GM23248 (cell line): ENCODE measurements at regions of chr1 and their contacts with region 1.

Region 1: DNA sequence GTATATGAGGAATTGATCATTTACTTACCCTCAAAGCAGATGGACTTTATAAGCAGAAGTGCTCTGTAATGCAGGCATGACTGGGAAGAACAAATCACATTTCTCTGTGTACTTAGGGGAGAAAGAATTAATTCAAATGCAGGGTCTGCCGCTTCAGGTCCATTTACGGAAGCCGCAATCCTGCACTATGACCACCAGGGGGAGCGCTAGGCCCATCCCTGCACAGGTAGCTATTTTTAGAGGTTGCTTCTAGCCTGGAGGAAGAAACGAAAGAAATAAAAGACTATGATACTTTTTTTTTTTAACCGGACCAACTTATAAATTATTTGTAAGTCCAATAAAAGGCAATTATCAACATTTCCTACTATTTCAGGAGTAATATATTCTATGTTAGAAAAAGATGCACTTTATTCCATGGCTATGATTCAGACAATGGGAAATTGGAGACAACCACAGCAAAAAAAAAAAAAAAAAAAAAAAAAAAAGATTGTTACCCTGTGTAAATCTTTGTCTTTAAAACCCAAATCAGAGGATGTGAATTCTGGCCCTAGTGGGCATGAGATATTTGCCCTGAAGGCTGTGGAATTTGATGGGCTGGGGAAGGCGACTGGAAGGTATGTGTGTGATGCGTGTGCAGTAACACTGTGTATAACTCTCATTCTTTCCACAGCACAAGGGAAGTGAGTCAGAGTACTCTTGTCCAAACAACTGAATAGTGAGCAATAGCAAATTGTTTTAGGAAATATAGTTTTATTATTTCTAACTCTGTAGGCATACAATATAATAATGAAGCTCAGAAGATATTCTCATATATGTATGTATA is 12.9 kb upstream of the FYB2 start:
- DNase-seq: peak; percentile 97
- H3K4me3 ChIP-seq: peak overlapping the region; percentile 53
- H3K27ac ChIP-seq: peak overlapping the region; percentile 77
- H3K4me1 ChIP-seq: peaks cover 16% of the 10 kb centered on the region
- H3K27me3 ChIP-seq: no peaks in the 10 kb centered on the region

Region 2: DNA sequence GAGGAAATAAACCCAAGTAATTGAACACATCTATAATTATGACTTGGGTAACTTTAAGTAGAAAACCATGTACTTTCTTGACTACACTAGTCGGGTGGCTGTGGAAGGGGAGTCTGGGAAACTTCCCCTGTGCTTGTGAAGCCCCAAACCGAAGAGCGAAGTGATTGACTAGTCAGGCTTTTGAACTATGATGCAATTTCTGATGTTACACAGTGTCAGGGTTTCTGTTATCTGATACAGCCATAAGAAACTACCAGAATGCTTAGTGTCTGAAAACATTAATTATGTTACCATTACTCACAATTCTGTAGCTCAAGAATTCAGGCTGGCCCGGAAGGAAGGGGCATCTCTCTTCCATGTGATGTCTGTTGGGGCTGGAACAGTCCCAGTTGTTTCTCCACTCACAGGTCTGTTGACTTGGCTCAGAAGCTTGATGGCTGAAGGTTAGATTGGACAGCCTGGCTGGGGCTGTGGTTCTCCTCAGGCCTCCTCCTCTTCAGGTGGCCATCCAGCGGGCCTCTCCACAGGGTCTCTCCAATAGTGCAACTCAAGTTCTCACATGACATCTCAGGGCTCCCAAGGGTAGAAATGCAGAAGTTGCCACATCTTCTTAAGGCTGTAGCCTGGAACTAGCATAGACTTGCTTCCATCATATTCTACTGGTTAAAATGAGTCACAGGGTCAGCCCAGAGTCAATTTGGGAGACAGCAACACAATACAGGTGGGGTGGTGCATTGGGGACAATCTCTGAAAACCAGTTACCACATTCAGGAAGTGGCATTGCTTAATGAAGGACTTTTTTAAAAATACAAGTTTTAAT is 142.1 kb after region 1 on chr1:
- in situ Hi-C with region 1: loop called (anchors 10 kb)
- DNase-seq: no peak
- H3K4me3 ChIP-seq: no peak overlapping the region
- H3K27ac ChIP-seq: no peak overlapping the region
- H3K4me1 ChIP-seq: no peaks in the 10 kb centered on the region
- H3K27me3 ChIP-seq: no peaks in the 10 kb centered on the region

Region 3: DNA sequence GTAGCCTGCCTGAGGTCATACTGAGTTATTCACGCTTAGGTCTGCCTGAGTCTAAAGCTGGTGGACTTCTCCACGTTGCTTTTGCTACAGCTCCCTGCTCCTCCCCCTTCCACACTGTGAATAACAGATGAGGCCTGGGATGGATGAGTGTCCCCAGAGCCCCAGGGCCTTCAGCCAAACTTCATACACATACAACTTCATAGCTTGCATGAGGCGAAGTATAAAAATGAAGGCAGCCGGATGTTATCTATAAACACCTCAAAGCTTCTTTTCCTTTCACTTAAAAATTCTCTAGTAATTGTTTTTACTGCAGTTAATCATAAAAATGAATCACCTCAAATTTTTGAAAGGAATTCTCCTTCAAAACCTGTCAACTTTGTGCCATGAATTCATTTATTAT is 521.6 kb after region 1 on chr1:
- in situ Hi-C with region 1: no loop called
- DNase-seq: peak; percentile 65
- H3K4me3 ChIP-seq: no peak overlapping the region
- H3K27ac ChIP-seq: no peak overlapping the region
- H3K4me1 ChIP-seq: no peaks in the 10 kb centered on the region
- H3K27me3 ChIP-seq: no peaks in the 10 kb centered on the region; the same call in 1 of the 2 replicates

Region 4: DNA sequence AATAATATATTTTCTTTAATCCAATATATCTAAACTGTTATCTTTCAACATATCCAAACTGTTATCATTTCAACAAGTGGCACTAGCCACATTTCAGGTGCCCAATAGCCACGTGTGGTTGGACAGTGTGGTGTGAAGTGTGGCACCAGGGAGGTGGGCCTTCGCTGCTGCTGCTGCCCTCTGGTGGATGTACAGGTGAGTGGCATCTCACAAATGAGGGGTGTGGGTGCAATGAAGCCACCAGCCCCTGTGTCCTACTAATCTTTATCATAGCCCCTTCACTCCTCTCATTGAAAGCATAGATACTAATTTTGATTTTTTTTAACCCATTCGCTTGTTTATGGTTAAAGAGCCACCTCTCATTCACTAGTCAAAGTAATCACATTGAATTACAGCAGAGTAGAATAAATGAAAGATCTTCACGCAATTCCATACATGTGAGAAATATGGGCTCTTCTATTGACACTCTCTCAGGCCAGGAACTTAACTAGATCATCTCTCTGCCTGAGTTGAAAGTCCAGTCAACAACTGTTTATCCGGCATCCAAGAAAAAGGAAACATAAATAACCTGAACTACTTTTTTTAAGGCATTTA is 1215.3 kb after region 1 on chr1:
- in situ Hi-C with region 1: loop called (anchors 10 kb)
- DNase-seq: peak; percentile 32
- H3K4me3 ChIP-seq: no peak overlapping the region
- H3K27ac ChIP-seq: no peak overlapping the region
- H3K4me1 ChIP-seq: no peaks in the 10 kb centered on the region
- H3K27me3 ChIP-seq: peaks cover 3% of the 10 kb centered on the region; the same call in 1 of the 2 replicates

Region 5: GRCh38 chr1:58162952-58163550 is 1331.0 kb after region 1 on chr1:
- in situ Hi-C with region 1: loop called (anchors 25 kb)
- DNase-seq: peak; percentile 80
- H3K4me3 ChIP-seq: no peak overlapping the region
- H3K27ac ChIP-seq: no peak overlapping the region
- H3K4me1 ChIP-seq: no peaks in the 10 kb centered on the region
- H3K27me3 ChIP-seq: no peaks in the 10 kb centered on the region